Common myeloid progenitor, CD34-positive (primary cell): ENCODE measurements at regions of chr7 and their contacts with region 1.

Region 1: GRCh38 chr7:116929914-116930913 is 23.1 kb upstream of the ST7 start:
- DNase-seq: peak; percentile 66 to 79 (median 67)
- H3K4me3 ChIP-seq: peak overlapping the region in 1 of 7 experiments; percentile 48
- H3K27ac ChIP-seq: no peak overlapping the region
- H3K4me1 ChIP-seq: peaks cover 0 to 3% (median 0%) of the 10 kb centered on the region in 4 experiments
- H3K27me3 ChIP-seq: no peaks in the 10 kb centered on the region

Region 2: DNA sequence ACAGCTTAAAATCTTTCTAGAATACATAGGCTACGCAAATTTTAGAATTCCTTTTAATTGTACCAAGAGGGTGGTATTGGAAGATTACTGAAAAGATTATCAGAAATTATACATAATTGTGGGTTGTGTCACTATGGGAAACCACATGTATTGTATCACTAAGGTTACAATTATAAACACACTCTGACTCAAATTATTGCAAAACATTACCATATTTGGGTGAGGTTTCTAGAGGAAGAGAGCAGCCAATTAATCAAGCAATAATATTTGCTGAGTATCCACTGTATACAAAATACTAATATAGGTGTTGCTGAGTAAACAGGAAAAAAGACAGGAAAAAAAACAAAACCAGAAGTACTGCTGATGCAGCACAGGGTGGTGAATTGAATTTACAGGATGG is 70.9 kb before region 1 on chr7:
- CTCF ChIA-PET with region 1: no interaction called
- POLR2A ChIA-PET with region 1: no interaction called
- DNase-seq: peak; percentile 62 to 87 (median 80)
- H3K4me3 ChIP-seq: no peak overlapping the region
- H3K27ac ChIP-seq: peak overlapping the region; percentile 9 to 65
- H3K4me1 ChIP-seq: peaks cover 11 to 23% (median 13%) of the 10 kb centered on the region in 4 experiments
- H3K27me3 ChIP-seq: no peaks in the 10 kb centered on the region

Region 3: DNA sequence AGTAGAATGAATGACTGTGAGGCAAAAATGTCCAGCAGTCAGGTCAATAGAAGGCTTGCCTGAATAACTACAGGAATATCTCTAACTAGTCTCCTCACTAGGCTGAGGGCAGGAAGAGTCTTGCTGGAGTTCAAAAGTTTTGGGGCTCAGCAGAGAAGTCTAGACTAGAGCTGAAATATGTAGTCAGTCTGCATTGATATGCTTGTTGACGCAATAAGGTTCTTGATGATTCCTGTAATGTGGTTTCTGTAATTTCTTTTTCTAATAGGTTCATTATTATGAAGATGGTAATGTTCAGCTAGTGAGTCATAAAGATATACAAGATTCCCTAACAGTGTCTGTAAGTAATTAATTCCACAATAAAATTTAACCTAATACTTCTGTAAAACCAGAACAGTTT is 18.4 kb before region 1 on chr7:
- CTCF ChIA-PET with region 1: interaction called, 10 read pairs
- POLR2A ChIA-PET with region 1: no interaction called
- DNase-seq: no peak
- H3K4me3 ChIP-seq: no peak overlapping the region
- H3K27ac ChIP-seq: no peak overlapping the region
- H3K4me1 ChIP-seq: no peaks in the 10 kb centered on the region
- H3K27me3 ChIP-seq: no peaks in the 10 kb centered on the region

Region 4: DNA sequence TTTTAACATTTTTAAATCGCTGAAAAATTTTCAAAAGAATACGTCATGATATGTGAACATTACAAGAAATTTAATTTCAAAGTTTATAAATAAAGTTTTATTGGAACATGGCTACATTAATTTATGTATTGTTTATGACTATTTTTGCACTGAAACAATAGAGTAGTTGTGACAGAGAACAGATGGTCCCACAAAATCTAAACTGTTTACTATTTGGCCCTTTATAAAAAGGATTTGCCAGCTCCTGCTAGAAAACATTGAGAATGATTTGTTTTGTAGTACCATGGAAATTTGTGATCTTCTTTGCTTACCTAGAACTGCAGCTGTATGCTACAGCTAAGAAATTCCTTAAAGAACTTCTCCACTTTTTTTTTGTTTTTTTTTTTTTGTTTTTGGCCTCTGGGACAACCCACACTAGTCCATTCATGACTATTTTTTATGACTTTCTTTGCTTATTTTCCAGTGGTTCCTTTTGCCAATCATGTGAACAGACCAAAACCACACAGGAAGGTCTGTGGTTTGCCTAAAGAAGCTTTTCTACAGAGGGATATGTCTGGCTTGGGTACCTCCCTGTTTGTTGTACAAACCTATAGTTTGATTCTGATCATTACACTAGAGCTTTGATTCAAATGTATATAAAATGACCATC is 78.8 kb after region 1 on chr7:
- CTCF ChIA-PET with region 1: interaction called, 10 read pairs
- POLR2A ChIA-PET with region 1: interaction called, 4 read pairs
- DNase-seq: peak; percentile 79 to 94 (median 92)
- H3K4me3 ChIP-seq: no peak overlapping the region
- H3K27ac ChIP-seq: no peak overlapping the region
- H3K4me1 ChIP-seq: peaks cover 11 to 44% (median 31%) of the 10 kb centered on the region in 4 experiments
- H3K27me3 ChIP-seq: no peaks in the 10 kb centered on the region

Region 5: GRCh38 chr7:117127585-117128168 is 197.5 kb after region 1 on chr7:
- CTCF ChIA-PET with region 1: interaction called, 161 read pairs
- POLR2A ChIA-PET with region 1: no interaction called
- DNase-seq: peak; percentile 58 to 81 (median 76)
- H3K4me3 ChIP-seq: no peak overlapping the region
- H3K27ac ChIP-seq: no peak overlapping the region
- H3K4me1 ChIP-seq: peaks cover 0 to 15% (median 10%) of the 10 kb centered on the region in 4 experiments
- H3K27me3 ChIP-seq: no peaks in the 10 kb centered on the region